Right ventricle myocardium inferior (tissue), 1 donor: ENCODE measurements at regions of chr9 and their contacts with region 1.

Region 1: DNA sequence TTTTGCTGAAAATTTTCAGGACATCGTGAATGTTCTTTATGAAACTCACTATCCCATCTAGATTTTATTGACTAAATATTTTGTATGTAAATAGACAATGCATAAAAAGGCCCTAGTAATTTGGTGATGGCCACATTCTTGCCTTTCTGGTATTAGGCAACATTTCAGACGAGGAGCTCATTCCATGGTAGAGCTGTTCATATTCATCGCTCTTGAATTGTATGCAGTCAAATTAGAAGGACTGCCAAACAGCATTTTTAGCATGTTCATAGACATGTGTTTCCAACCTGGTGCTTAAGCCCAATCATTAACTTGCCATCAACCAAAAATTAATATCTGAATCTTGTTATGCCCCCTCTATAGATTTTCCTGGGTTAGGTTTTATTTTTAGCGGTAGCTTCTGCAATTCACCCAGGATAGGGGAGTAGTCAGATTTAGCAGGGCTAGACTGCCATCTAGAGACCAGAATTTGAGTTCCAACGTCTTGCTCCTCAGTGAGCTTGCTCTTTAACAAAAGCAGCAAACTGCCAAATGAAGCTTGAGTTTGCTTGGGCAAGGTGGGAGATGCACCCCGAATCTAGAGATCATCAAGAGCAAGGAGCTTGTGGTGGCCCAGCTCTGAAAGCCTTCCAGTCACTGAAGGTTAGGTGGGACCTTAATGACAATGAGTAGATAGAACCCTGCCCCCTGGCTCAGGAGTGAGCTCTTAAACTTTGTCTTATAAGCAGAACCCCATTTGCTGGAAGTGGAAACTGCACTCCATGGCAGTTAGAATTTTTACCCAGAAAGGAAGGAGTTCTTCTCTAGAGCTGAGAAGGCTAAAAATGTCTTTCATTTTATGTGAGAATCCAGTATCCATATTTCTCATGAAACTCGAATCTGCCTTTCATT is 456.2 kb downstream of the RASEF start:
- DNase-seq: no peak
- ATAC-seq: peak; percentile 81

Region 2: GRCh38 chr9:81521892-81522291 is 1084.8 kb before region 1 on chr9:
- intact Hi-C with region 1: loop called (anchors 5 kb)
- DNase-seq: no peak
- ATAC-seq: no peak

Region 3: GRCh38 chr9:82532504-82533180 is 74.1 kb before region 1 on chr9:
- intact Hi-C with region 1: loop called (anchors 2 kb)
- DNase-seq: no peak
- ATAC-seq: no peak